PC-3 (cell line): ENCODE measurements at regions of chr9 and their contacts with region 1.

Region 1: DNA sequence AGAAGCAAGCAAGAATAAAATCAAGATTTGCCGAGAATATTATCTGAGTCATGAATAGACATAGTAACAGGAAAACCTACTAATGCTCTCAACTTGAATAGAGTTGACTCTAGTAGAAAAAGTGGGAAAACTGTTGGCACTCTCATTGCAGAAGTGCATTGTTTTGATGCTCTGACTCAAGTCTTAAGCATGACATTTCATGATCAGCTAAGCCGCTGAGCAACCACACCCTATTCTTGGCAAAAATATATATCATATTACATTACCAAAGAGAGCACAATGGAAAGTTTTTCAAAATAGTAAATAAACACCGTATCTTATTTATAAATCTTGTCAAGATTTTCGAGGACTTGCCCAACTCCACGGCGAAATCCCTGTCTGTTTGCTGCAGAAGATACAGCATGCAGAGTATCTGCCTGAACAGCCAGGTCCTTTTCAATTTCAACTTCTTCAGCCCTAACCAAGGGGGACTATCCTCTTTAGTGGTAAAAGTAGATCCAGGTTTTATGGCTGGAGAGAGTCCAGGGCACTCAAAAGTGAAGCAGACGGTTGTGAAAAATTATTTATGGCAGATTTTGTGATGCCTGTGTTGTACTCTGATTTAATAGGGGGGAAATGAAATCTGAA is 13.9 kb upstream of the ADAMTSL1 start:
- DNase-seq: peak; percentile 94
- ATAC-seq: peak; percentile 85
- H3K4me3 ChIP-seq: peak overlapping the region; percentile 51; the same call in 1 of the 2 replicates
- H3K27ac ChIP-seq: peak overlapping the region; percentile 89
- H3K4me1 ChIP-seq: peaks cover 60% of the 10 kb centered on the region
- H3K27me3 ChIP-seq: no peaks in the 10 kb centered on the region
- CTCF ChIP-seq: no peak

Region 2: DNA sequence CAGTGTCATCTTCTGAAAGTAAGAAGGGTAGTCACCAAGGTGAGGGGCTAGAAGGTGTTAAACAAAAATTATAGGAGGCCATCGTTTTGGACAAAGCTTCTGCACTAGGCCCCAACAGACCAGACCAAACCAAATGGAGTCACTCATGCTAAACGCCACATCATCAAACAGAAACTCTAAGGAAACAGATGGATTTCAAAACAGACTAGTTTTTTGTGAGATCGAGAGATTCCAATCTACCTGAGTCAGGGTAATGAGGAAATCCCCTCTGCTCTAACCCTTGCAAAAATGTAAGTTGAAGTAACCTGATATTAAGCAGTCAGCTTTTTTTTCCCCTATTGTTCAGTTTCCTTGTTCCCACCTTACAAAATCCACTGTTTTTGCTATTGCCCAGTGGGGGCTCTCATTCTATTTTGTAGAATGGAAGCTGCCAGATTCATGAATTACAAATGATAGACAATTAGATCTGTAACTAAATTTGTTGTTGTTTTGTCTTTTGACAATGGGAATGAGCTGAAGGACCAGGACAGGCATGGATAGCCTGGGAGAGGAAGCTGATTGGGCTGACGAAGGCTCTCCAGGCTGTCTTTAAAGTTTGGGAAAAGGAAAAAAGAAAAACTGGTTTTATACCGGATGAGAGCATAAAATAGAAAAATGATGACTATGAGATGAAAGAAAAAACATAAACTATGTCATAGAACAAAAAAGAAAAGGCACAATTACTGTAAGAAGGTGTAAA is 80.8 kb before region 1 on chr9:
- CTCF ChIA-PET with region 1: no interaction called
- POLR2A ChIA-PET with region 1: no interaction called
- intact Hi-C with region 1: no loop called
- DNase-seq: peak; percentile 80
- ATAC-seq: peak; percentile 48; the same call in 1 of the 2 replicates
- H3K4me3 ChIP-seq: no peak overlapping the region
- H3K27ac ChIP-seq: peak overlapping the region; percentile 72
- H3K4me1 ChIP-seq: peaks cover 22% of the 10 kb centered on the region
- H3K27me3 ChIP-seq: no peaks in the 10 kb centered on the region
- CTCF ChIP-seq: no peak

Region 3: DNA sequence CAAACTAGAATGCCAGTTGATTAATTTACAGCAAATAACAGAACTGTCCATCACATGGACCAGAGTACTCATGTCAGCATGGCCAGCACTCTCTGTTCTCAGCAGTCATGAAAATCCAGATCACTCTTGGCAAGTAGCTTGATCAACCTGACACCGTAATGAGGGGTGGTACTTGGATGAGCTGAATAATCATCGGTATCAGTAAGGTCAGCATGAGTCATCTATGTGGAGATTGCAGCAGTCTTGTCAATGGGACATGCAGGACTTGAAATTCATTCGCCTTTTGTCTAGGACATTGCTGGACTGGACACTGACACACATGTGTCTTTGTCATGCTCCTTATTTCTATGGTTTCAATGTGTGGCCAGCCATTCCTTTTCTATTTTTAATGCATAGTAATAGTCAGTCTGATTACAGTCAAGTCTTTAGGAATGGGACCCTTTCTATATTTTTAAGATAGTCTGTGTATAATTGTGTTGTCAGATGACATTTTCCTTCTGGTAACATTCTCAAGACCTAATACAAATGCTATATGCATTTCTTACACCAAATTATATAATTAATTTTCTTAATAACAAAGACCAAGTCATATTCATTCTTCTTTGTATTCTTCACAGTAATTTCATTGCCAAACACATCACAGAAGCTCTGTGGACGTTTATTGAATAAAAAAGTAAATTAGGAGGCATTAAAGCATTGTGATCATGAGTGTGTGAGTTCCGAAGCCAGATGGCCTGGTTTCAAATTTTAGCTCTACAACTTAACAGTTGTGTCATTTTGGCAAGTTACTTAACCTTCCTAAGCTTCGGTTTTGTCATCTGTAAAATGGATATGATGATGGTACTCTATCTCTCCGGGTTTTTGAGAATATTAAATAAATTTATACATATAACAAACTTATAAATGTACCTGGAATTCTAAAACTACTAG is 71.3 kb after region 1 on chr9:
- CTCF ChIA-PET with region 1: no interaction called
- POLR2A ChIA-PET with region 1: no interaction called
- intact Hi-C with region 1: no loop called
- DNase-seq: no peak
- ATAC-seq: no peak
- H3K4me3 ChIP-seq: no peak overlapping the region
- H3K27ac ChIP-seq: no peak overlapping the region
- H3K4me1 ChIP-seq: no peaks in the 10 kb centered on the region
- H3K27me3 ChIP-seq: no peaks in the 10 kb centered on the region
- CTCF ChIP-seq: no peak

Region 4: DNA sequence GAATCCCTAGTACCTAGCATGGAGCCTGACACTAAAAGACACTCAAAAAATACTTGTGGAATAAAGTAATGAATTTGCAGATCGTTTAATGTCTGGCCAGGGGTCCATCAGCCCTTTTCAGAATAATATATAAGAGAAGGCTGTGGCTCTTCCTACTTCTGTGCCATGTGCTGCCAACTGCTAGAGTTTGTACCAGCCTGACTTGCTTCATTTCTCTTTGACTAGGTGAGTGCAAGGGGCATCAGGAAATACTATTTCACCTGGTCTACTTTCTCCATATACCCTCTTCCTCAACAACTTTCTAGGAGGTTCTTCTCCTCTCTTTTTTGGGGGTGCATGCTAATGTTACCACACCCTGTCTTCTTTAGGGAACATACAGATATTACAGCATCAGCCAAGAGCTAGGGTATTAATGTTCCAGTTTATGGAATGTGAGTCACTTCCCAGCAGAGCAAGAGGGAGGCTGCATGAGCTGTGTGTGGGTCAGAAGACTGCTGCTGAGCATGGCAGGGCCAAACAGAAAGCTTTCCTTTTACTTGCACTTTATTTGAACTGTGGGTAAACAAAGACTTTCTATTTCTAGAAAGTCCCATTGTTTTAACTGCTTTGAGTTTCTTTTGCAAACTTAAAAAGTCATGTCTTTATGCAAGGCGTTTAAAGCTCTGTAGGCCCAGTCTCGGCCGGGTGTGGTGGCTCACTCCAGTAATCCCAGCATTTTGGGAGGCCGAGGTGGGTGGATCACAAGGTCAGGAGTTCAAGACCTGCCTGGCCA is 172.7 kb after region 1 on chr9:
- CTCF ChIA-PET with region 1: no interaction called
- POLR2A ChIA-PET with region 1: no interaction called
- intact Hi-C with region 1: loop called (anchors 5 kb)
- DNase-seq: peak; percentile 82
- ATAC-seq: peak; percentile 100
- H3K4me3 ChIP-seq: no peak overlapping the region
- H3K27ac ChIP-seq: peak overlapping the region; percentile 90
- H3K4me1 ChIP-seq: peaks cover 18% of the 10 kb centered on the region
- H3K27me3 ChIP-seq: no peaks in the 10 kb centered on the region
- CTCF ChIP-seq: no peak